Ascending aorta (tissue), 2 donors: ENCODE measurements at regions of chr3 and their contacts with region 1.

Region 1: GRCh38 chr3:69324362-69325025 is 61.4 kb downstream of the FRMD4B start:
- DNase-seq: no peak
- H3K4me3 ChIP-seq: no peak overlapping the region
- H3K27ac ChIP-seq: no peak overlapping the region
- H3K4me1 ChIP-seq: peaks cover 3 to 17% of the 10 kb centered on the region in 2 donors
- H3K27me3 ChIP-seq: no peaks in the 10 kb centered on the region
- CTCF ChIP-seq: peak in 2 of 3 experiments; percentile 12 to 31

Region 2: DNA sequence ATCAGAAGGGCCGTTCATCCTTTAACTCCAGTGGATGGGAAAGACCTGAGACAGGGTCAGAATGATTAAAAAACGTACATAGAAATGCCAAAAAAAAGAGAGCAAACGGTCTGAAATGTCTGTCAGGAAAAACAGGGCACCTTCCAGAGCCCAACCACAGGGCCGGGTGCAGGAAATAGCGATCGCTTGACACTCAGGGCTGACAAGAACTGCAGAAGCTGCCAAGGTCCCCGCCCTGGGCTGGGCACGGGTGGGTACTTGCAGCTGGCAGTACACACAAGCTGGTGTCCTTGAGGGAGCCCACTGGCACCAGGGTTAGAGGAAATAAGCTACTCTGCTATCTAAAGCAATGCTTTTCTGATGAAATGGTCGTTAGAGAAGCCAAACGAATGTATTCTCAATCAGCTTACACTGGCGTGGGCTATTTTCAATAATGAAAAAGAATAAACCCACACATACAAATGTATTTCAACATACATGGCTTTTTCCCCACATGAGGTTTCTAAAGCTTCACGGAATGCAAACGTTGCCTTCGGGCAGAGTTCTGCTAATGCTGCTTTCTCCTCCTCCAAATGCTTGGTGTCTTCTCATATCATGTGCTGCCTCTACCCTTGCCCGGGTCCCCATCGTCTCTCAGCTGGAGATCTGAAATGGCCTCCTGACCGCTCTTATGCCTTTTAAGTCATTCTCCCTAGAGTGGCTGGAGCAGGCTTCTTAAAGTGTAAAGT is 45.8 kb after region 1 on chr3:
- intact Hi-C with region 1: loop called (anchors 5 kb)
- DNase-seq: peak; percentile 50 to 90
- H3K4me3 ChIP-seq: peak overlapping the region in 1 of 2 donors; percentile 38
- H3K27ac ChIP-seq: peak overlapping the region; percentile 69 to 78
- H3K4me1 ChIP-seq: peaks cover 6 to 28% of the 10 kb centered on the region in 2 donors
- H3K27me3 ChIP-seq: no peaks in the 10 kb centered on the region
- CTCF ChIP-seq: no peak

Region 3: DNA sequence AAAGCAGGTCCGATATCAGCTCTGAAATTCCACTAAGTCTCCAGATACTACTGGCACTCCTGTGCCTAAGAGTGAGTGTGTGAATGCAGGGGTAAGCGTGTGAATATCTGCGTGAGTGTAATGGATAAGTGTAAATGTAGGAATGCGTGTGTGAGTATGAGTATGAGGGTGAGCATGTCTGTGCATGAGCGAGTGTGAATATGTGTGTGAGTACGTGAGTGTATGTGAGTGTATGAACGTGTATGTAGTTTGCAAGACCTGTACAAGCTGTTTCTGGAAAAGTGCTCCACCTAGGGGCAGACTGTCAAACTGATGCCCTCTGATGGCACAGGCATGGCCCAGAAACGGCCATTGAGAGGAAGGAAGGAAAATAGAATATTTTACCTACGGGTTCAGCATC is 85.8 kb after region 1 on chr3:
- intact Hi-C with region 1: loop called (anchors 5 kb)
- DNase-seq: peak in 1 of 2 donors; percentile 81
- H3K4me3 ChIP-seq: peak overlapping the region in 1 of 2 donors; percentile 25
- H3K27ac ChIP-seq: peak overlapping the region in 1 of 2 donors; percentile 42
- H3K4me1 ChIP-seq: peaks cover 0 to 7% of the 10 kb centered on the region in 2 donors
- H3K27me3 ChIP-seq: no peaks in the 10 kb centered on the region
- CTCF ChIP-seq: peak; percentile 66 to 86 (median 83)